H1 (cell line): ENCODE measurements at regions of chr18 and their contacts with region 1.

Region 1: DNA sequence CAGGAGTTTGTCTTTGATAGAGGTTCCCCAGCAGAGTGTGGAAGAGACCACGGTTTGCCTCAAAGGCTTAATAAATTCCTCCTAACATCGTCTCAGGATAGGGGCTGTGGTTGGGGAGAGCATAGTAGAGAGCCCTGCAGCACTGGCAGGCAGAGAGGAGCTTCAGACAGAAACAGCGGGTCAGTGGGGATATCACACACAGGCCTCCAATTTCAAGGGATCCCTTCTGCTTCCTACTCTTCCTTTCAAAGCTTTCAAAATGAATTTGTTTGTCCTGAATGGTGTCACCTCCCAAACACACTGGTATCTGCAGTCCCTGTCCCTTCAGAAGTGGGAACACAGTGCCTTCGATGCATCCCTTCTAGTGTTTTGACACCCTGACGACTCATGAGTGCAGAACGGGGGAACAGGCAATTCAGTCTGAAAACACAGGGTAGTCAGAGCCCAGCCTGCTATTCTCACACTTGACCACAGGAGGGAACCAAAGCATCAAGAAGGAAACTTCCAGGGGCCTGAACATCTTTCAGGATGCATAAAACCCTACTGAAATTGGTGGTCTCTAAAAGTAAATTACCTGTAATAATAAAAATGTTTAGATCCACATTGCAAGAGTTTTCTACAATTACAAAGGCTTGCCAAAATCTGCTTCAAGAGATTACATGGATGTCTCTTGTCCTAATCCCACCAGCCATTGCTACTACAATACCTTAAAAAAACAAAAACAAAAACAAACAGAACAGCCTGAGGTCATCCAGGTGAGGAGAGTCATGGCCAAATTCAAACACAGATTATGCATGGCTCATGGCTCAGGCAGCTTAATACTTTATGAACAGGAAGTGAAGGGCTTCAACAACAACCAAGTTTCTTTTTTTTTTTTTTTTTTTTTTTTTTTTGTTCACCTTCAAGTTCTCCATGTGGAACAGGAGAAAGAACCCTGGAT is 49.8 kb downstream of the SLC14A2 start:
- DNase-seq: peak; percentile 27 to 70
- H3K4me3 ChIP-seq: no peak overlapping the region
- H3K27ac ChIP-seq: no peak overlapping the region
- H3K4me1 ChIP-seq: peaks cover 0 to 13% (median 3%) of the 10 kb centered on the region in 4 experiments; a peak in 6 of 7 replicates
- H3K27me3 ChIP-seq: no peaks in the 10 kb centered on the region
- CTCF ChIP-seq: peak; percentile 52 to 89 (median 87)
- EP300 ChIP-seq: no peak
- POLR2A ChIP-seq: no peak
- RAD21 ChIP-seq: peak; percentile 95

Region 2: DNA sequence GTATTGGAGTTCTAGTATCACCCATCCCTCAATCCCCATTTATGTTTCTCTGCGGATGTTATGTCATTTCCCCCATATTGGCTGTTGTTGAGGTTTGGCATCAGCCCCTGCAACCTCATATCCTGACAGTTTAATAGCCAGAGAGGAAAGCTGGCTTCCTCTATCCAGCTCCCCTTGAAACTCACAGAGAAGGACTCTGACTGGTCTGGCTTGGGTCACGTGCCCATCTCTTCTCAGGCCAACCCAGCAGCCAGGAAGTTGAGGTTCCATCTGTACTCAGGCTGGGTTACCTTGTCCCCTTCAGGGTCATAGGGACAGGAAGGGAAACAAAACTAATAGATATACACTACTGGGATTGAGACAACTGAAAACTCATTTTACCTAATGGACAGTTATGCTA is 197.8 kb before region 1 on chr18:
- CTCF ChIA-PET with region 1: no interaction called
- POLR2A ChIA-PET with region 1: no interaction called
- DNase-seq: no peak
- H3K4me3 ChIP-seq: no peak overlapping the region
- H3K27ac ChIP-seq: no peak overlapping the region
- H3K4me1 ChIP-seq: no peaks in the 10 kb centered on the region
- H3K27me3 ChIP-seq: no peaks in the 10 kb centered on the region
- CTCF ChIP-seq: no peak
- EP300 ChIP-seq: no peak
- POLR2A ChIP-seq: no peak
- RAD21 ChIP-seq: no peak

Region 3: GRCh38 chr18:45526114-45526841 is 138.8 kb before region 1 on chr18:
- CTCF ChIA-PET with region 1: no interaction called
- POLR2A ChIA-PET with region 1: no interaction called
- DNase-seq: no peak
- H3K4me3 ChIP-seq: no peak overlapping the region
- H3K27ac ChIP-seq: no peak overlapping the region
- H3K4me1 ChIP-seq: no peaks in the 10 kb centered on the region
- H3K27me3 ChIP-seq: no peaks in the 10 kb centered on the region
- CTCF ChIP-seq: no peak
- EP300 ChIP-seq: no peak
- POLR2A ChIP-seq: no peak
- RAD21 ChIP-seq: peak; percentile 19 to 44; a peak in 1 of 4 replicates

Region 4: DNA sequence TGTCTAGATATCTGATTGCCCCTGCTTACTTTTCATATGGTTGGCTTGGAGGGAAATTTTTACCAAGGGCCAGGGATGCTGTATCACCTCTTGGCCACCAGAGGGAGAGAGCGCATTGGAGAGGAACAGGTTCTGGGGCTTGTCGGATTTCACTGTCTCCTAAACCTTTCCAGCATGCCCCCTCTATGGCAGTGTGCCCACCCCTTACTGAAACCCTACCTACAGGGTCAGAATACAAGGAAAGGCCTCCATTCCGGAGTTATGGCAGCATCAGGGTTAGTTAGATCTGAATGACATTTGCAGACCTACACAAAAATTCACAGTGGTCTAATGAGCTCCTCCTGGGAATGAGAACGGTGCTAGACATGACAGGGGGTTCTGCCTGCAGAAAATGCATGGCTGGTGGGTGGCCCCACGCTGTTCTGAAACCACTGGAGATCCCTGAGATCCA is 44.0 kb before region 1 on chr18:
- CTCF ChIA-PET with region 1: interaction called, 83 read pairs
- POLR2A ChIA-PET with region 1: no interaction called
- DNase-seq: peak in 1 of 2 experiments; percentile 56
- H3K4me3 ChIP-seq: no peak overlapping the region
- H3K27ac ChIP-seq: no peak overlapping the region
- H3K4me1 ChIP-seq: peaks cover 0 to 2% (median under 1%) of the 10 kb centered on the region in 4 experiments; a peak in 2 of 7 replicates
- H3K27me3 ChIP-seq: no peaks in the 10 kb centered on the region
- CTCF ChIP-seq: peak; percentile 81 to 92 (median 82)
- EP300 ChIP-seq: no peak
- POLR2A ChIP-seq: no peak
- RAD21 ChIP-seq: peak; percentile 77 to 83

Region 5: GRCh38 chr18:45677276-45677807 is 12.2 kb after region 1 on chr18:
- CTCF ChIA-PET with region 1: interaction called, 67 read pairs
- POLR2A ChIA-PET with region 1: no interaction called
- DNase-seq: no peak
- H3K4me3 ChIP-seq: no peak overlapping the region
- H3K27ac ChIP-seq: no peak overlapping the region
- H3K4me1 ChIP-seq: peaks cover 0 to 2% (median 0%) of the 10 kb centered on the region in 4 experiments; a peak in 1 of 7 replicates
- H3K27me3 ChIP-seq: no peaks in the 10 kb centered on the region
- CTCF ChIP-seq: no peak
- EP300 ChIP-seq: no peak
- POLR2A ChIP-seq: no peak
- RAD21 ChIP-seq: no peak

Region 6: DNA sequence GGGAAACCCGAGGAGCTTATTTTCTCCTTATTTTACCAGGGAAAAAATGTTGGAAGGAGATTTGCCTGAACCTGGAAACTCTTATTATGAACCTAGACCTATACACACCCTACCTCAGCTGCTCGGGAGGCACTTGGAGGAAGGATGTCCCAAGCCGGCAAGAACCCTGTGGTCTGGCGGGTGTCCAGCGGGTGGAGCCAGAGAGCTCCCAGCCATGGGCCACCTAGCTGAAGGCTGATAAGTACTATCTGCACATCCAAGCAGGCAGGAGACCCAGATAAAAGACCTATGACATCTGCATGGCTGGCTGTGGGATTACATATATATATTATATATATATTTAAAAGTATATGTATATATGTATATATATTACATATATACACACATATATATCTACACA is 57.8 kb after region 1 on chr18:
- CTCF ChIA-PET with region 1: interaction called, 31 read pairs
- POLR2A ChIA-PET with region 1: no interaction called
- DNase-seq: peak; percentile 56 to 95
- H3K4me3 ChIP-seq: no peak overlapping the region
- H3K27ac ChIP-seq: no peak overlapping the region
- H3K4me1 ChIP-seq: peaks cover 0 to 4% (median 0%) of the 10 kb centered on the region in 4 experiments; a peak in 1 of 7 replicates
- H3K27me3 ChIP-seq: no peaks in the 10 kb centered on the region
- CTCF ChIP-seq: peak; percentile 88 to 98 (median 91)
- EP300 ChIP-seq: no peak
- POLR2A ChIP-seq: no peak
- RAD21 ChIP-seq: peak; percentile 90 to 96

Region 7: DNA sequence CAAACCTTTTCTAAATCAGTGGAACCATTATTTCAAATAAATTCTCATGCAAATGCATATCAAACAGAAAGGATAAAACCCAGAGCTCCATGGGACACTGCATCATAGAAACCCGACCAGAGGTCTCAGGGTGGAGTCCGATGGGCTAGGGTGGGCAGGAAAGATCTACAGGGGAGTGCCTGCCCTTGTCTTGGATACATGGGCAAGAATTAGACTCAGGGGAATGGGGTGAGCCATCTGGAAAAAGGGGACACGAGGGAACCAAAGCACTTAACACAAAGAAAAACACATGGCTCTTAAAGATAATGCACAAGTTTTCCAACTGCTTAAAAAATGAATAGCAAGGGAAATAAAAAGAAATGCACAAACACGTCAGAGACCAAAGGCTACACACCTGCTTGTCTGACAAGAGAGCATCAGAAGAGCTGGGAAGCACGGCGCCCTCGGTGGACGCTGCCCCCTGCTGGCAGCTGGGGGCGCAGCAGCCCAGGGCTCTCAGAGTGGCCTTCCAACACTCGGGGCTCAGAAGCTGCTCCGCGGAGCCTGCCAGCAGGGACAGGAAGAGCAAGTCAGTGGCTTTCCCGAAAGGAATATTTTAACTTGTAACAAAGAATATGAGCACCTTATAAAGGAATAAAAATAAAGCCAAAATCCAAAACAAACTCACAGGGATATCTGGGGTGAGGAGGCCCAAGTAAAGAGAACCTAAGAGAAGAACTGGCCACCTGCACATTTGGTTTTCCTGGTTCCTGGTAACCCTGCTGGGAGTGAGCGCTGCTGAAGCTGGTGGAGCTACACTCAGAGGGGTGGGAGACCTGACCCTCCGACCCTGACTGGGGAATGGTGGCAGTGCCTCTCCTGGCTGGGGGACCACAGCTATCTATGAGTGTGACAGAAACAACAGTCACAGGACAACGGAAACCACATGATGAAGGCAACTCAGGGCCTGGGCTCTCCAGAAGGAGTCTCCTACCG is 214.9 kb after region 1 on chr18:
- CTCF ChIA-PET with region 1: interaction called, 61 read pairs
- POLR2A ChIA-PET with region 1: no interaction called
- DNase-seq: peak; percentile 71 to 91
- H3K4me3 ChIP-seq: no peak overlapping the region
- H3K27ac ChIP-seq: no peak overlapping the region
- H3K4me1 ChIP-seq: no peaks in the 10 kb centered on the region
- H3K27me3 ChIP-seq: no peaks in the 10 kb centered on the region
- CTCF ChIP-seq: peak; percentile 97 to 99 (median 99)
- EP300 ChIP-seq: no peak
- POLR2A ChIP-seq: no peak
- RAD21 ChIP-seq: peak; percentile 90 to 93

Region 8: DNA sequence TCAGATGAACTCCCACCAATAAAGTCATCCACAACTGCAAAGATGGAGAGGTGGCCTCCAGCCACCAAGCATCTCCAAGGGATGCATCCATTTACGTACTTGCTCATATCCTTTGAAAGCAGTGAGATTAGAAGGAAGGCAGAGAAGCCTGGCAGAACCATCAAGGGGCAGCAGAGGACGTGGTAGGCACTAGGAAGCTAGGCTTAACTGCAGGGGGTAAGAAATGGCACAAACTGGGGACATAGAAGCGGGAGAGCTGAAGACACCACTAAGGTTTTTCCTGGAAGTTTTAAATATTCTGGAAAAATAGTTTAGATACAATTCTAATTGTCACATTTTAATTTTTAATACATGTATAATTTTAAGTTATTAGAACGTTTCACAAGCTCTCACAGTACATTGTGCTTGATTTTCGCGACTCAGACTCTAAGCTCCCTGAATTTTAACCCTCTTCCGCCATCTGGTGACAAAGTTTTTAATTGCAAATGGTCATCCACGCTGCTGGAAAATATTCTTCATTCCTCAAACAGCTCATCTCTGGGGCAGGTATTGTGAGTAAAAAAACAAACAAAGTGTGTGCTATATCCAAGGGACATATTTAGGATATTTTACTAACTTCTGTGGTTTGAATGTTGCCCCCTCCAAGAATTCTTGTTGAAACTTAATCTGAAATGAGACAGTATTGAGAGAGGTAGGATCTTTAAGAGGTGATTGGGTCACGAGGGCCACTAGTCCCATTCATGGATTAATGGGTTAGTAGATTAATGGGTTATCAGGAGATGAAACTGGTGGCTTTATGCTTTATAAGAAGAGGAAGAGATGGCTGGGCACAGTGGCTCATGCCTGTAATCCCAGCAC is 408.6 kb after region 1 on chr18:
- CTCF ChIA-PET with region 1: interaction called, 26 read pairs
- POLR2A ChIA-PET with region 1: no interaction called
- DNase-seq: peak in 1 of 2 experiments; percentile 61
- H3K4me3 ChIP-seq: no peak overlapping the region
- H3K27ac ChIP-seq: no peak overlapping the region
- H3K4me1 ChIP-seq: peaks cover 0 to 6% (median 0%) of the 10 kb centered on the region in 4 experiments; a peak in 2 of 7 replicates
- H3K27me3 ChIP-seq: peaks cover 4 to 31% (median 28%) of the 10 kb centered on the region in 4 experiments
- CTCF ChIP-seq: peak; percentile 19 to 55 (median 54)
- EP300 ChIP-seq: no peak
- POLR2A ChIP-seq: no peak
- RAD21 ChIP-seq: peak; percentile 82